ENCODE measurements at regions of chr13 and their contacts with region 1.

Region 1: GRCh38 chr13:42594970-42595571 is 21.1 kb downstream of the TNFSF11 start:
- DNase-seq: peak; percentile 13
- H3K4me3 ChIP-seq: no peak overlapping the region
- H3K27me3 ChIP-seq: peaks cover 6% of the 10 kb centered on the region
- CTCF ChIP-seq: peak; percentile 74

Region 2: GRCh38 chr13:43077046-43077445 is 482.0 kb after region 1 on chr13:
- CTCF ChIA-PET with region 1: no interaction called
- POLR2A ChIA-PET with region 1: interaction called, 10 read pairs
- DNase-seq: no peak
- H3K4me3 ChIP-seq: no peak overlapping the region
- H3K27me3 ChIP-seq: no peaks in the 10 kb centered on the region
- CTCF ChIP-seq: no peak